CD4-positive, alpha-beta memory T cell (primary cell): ENCODE measurements at regions of chr14 and their contacts with region 1.

Region 1: DNA sequence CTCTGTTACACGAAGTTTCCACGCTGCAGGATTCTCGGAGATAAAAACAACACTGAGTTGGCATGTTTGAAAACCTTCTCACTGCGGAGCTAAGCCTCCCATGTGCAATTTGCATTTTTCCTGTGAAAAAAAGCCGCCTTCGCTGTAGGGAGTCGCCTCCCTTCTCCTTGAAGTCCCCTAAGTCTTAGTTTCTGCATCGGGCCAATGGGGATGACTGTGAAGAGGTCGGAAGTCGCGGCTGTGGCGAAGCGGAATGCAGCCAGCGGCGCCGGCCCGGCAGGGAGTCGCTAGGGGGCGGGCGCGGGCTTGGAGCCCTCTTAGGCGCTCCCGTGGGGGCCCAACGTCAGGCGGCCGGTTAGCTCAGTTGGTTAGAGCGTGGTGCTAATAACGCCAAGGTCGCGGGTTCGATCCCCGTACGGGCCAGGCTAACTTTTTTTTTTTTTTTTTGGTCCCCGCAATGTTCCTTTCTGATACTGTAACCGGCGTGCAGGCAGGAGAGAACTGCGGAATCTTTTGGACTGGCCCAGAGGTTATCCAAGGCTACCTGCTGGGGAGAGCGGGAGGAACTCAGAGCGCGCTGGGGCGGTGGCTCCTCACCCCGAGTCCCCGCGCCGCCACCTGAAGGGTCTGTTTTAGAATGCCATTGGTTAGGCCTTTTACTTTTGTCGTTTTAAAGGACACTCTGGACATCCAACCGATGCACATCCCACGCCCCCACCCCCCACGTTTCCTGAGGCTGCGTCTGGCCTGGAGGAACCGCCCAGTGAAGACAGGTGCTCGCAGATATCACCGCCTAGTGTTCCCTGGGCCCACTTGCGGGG is 2.6 kb upstream of the ZNF839 start:
- DNase-seq: peak; percentile 90 to 98 (median 95)
- H3K4me3 ChIP-seq: peak overlapping the region; percentile 59 to 76
- H3K4me3 Mint-ChIP-seq: peak overlapping the region; percentile 92 to 99 (median 96)
- H3K27ac ChIP-seq: peak overlapping the region; percentile 52
- H3K27ac Mint-ChIP-seq: peak overlapping the region; percentile 75 to 100 (median 96)
- H3K4me1 ChIP-seq: peaks cover 57% of the 10 kb centered on the region
- H3K4me1 Mint-ChIP-seq: peaks cover 30 to 77% (median 49%) of the 10 kb centered on the region in 4 donors
- H3K27me3 ChIP-seq: no peaks in the 10 kb centered on the region
- H3K27me3 Mint-ChIP-seq: peaks cover 4 to 9% of the 10 kb centered on the region in 2 donors

Region 2: GRCh38 chr14:101947906-101948665 is 368.9 kb before region 1 on chr14:
- CTCF ChIA-PET with region 1: interaction called, 3 read pairs
- POLR2A ChIA-PET with region 1: interaction called, 4 read pairs
- intact Hi-C with region 1: loop called (anchors 5 kb)
- DNase-seq: peak; percentile 99 to 100 (median 100)
- H3K4me3 ChIP-seq: peak overlapping the region; percentile 87 to 98
- H3K4me3 Mint-ChIP-seq: peak overlapping the region; percentile 92 to 99 (median 96)
- H3K27ac ChIP-seq: peak overlapping the region; percentile 94
- H3K27ac Mint-ChIP-seq: peak overlapping the region; percentile 99 to 100 (median 100)
- H3K4me1 ChIP-seq: peaks cover 13% of the 10 kb centered on the region
- H3K4me1 Mint-ChIP-seq: peaks cover 6 to 31% (median 21%) of the 10 kb centered on the region in 4 donors
- H3K27me3 ChIP-seq: peaks cover 5% of the 10 kb centered on the region
- H3K27me3 Mint-ChIP-seq: peaks cover 9 to 16% of the 10 kb centered on the region in 2 donors

Region 3: GRCh38 chr14:102063091-102063802 is 253.7 kb before region 1 on chr14:
- CTCF ChIA-PET with region 1: interaction called, 3 read pairs
- POLR2A ChIA-PET with region 1: no interaction called
- intact Hi-C with region 1: loop called (anchors 1 kb)
- DNase-seq: peak; percentile 65 to 78 (median 69)
- H3K4me3 ChIP-seq: no peak overlapping the region
- H3K4me3 Mint-ChIP-seq: no peak overlapping the region
- H3K27ac ChIP-seq: no peak overlapping the region
- H3K27ac Mint-ChIP-seq: no peak overlapping the region
- H3K4me1 ChIP-seq: no peaks in the 10 kb centered on the region
- H3K4me1 Mint-ChIP-seq: peaks cover 1 to 2% (median 2%) of the 10 kb centered on the region in 4 donors
- H3K27me3 ChIP-seq: no peaks in the 10 kb centered on the region
- H3K27me3 Mint-ChIP-seq: no peaks in the 10 kb centered on the region

Region 4: DNA sequence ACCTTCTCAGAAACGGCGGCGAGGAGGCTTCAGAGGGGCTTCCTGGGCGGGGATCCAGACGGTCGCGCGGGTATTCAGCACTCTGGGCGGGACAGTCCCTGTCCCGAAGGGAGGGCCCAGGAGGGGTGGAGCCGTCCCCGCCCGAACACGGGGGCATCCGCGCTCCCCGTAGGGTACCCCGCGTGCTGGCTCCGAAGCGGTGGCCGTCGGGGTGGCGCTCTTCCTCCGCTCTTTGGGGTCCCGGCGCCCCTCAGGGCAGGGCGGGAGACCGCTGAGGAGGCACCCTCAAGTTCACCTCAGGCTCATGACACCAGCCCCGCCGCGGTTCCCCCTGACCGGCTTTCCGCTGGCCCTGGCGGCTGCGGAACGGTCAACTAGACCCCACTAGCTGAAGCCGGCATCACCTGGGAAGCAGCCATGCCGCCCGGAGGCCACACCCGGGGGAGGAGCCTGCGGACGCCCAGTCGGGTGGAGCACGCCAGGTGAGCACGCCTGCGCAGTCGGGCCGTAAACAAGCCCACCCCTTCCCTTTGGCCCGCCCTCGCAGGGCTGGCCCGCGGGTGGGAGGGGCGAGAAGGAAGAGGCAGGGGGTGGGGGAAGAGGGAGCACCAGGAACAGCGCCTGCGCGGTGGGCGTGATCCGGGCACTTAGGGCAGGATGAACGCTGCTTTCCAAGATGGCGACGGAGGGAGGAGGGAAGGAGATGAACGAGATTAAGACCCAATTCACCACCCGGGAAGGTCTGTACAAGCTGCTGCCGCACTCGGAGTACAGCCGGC is 177.5 kb before region 1 on chr14 and contains the start of gene WDR20:
- CTCF ChIA-PET with region 1: no interaction called
- POLR2A ChIA-PET with region 1: interaction called, 4 read pairs
- intact Hi-C with region 1: loop called (anchors 2 kb)
- DNase-seq: peak; percentile 98 to 100 (median 100)
- H3K4me3 ChIP-seq: peak within 1 kb of the TSS; percentile 65 to 91
- H3K4me3 Mint-ChIP-seq: peak within 1 kb of the TSS; percentile 97 to 99 (median 98)
- H3K27ac ChIP-seq: peak within 1 kb of the TSS; percentile 92
- H3K27ac Mint-ChIP-seq: peak within 1 kb of the TSS; percentile 95 to 98 (median 97)
- H3K4me1 ChIP-seq: peaks cover 30% of the 10 kb centered on the region
- H3K4me1 Mint-ChIP-seq: peaks cover 19 to 25% (median 21%) of the 10 kb centered on the region in 4 donors
- H3K27me3 ChIP-seq: no peaks in the 10 kb centered on the region
- H3K27me3 Mint-ChIP-seq: no peaks in the 10 kb centered on the region
- total RNA-seq, gene WDR20: 56.8 to 57.9 TPM

Region 5: GRCh38 chr14:102304611-102305509 is 12.1 kb before region 1 on chr14 and contains the start of gene MOK:
- CTCF ChIA-PET with region 1: interaction called, 71 read pairs
- POLR2A ChIA-PET with region 1: interaction called, 21 read pairs
- intact Hi-C with region 1: loop called (anchors 1 kb)
- DNase-seq: peak; percentile 96 to 98 (median 98)
- H3K4me3 ChIP-seq: peak within 1 kb of the TSS; percentile 73 to 82
- H3K4me3 Mint-ChIP-seq: peak within 1 kb of the TSS; percentile 88 to 98 (median 96)
- H3K27ac ChIP-seq: peak within 1 kb of the TSS; percentile 63
- H3K27ac Mint-ChIP-seq: peak within 1 kb of the TSS; percentile 95 to 100 (median 99)
- H3K4me1 ChIP-seq: peaks cover 5% of the 10 kb centered on the region
- H3K4me1 Mint-ChIP-seq: peaks cover 5 to 11% (median 8%) of the 10 kb centered on the region in 4 donors
- H3K27me3 ChIP-seq: no peaks in the 10 kb centered on the region
- H3K27me3 Mint-ChIP-seq: peaks cover 2 to 6% of the 10 kb centered on the region in 2 donors
- total RNA-seq, gene MOK: 0.73 to 1.3 TPM

Region 6: GRCh38 chr14:102516531-102517415 is 199.8 kb after region 1 on chr14:
- CTCF ChIA-PET with region 1: interaction called, 5 read pairs
- POLR2A ChIA-PET with region 1: no interaction called
- intact Hi-C with region 1: loop called (anchors 5 kb)
- DNase-seq: peak in 4 of 5 donors; percentile 49 to 71 (median 57)
- H3K4me3 ChIP-seq: peak overlapping the region in 1 of 2 donors; percentile 64
- H3K4me3 Mint-ChIP-seq: peak overlapping the region; percentile 75 to 89 (median 84)
- H3K27ac ChIP-seq: peak overlapping the region; percentile 31
- H3K27ac Mint-ChIP-seq: peak overlapping the region in 4 of 7 donors; percentile 46 to 86 (median 57)
- H3K4me1 ChIP-seq: peaks cover 9% of the 10 kb centered on the region
- H3K4me1 Mint-ChIP-seq: peaks cover 3 to 9% (median 4%) of the 10 kb centered on the region in 4 donors
- H3K27me3 ChIP-seq: no peaks in the 10 kb centered on the region
- H3K27me3 Mint-ChIP-seq: peaks cover 2 to 3% of the 10 kb centered on the region in 2 donors